ENCODE measurements at regions of chr10 and their contacts with region 1.

Region 1: DNA sequence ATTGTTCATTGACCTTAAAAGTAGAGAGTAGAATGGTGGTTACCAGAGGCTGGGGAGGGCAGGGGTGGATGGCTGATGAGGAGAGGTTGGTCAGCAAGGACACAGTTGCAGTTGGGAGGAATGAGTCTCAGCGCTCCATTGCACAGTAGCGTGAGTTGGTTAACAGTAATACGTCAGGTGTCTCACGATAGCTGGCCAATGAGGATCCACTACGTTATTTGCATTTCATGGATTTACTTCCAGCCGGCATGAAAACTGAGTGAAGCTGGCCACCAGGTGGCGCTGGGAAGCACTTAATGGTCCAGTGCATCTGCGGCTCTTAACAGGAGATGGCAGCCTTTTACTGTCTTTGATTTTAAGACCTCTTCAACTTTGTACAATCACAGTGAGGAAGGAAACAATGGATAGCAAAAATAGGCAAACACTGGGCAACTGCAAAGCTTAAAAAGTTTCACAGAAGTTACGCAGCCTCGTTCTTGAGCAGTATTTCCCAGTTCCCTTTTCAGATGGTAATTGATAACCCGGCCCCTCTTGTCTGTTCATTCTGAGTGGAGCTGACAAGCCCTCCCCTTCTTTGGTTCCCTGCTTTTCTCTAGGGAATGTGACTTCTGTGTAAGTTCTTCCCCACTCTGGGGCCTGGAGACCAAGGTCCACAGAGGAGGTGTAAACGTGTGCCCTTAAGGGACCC is 23.7 kb downstream of the AKR1E2 start:
- DNase-seq: peak; percentile 64
- ATAC-seq: peak; percentile 93
- H3K4me3 ChIP-seq: no peak overlapping the region
- H3K27ac ChIP-seq: no peak overlapping the region
- H3K4me1 ChIP-seq: no peaks in the 10 kb centered on the region; the same call in 1 of the 2 replicates
- H3K27me3 ChIP-seq: no peaks in the 10 kb centered on the region
- CTCF ChIP-seq: peak; percentile 94

Region 2: GRCh38 chr10:4708123-4708759 is 141.5 kb before region 1 on chr10:
- CTCF ChIA-PET with region 1: no interaction called
- POLR2A ChIA-PET with region 1: no interaction called
- in situ Hi-C with region 1: no loop called
- intact Hi-C with region 1: no loop called
- DNase-seq: no peak
- ATAC-seq: no peak
- H3K4me3 ChIP-seq: no peak overlapping the region
- H3K27ac ChIP-seq: peak overlapping the region; percentile 94; the same call in 1 of the 2 replicates
- H3K4me1 ChIP-seq: peaks cover 9% of the 10 kb centered on the region; the same call in 1 of the 2 replicates
- H3K27me3 ChIP-seq: no peaks in the 10 kb centered on the region
- CTCF ChIP-seq: peak; percentile 28

Region 3: GRCh38 chr10:5283305-5284158 is 433.8 kb after region 1 on chr10:
- CTCF ChIA-PET with region 1: no interaction called
- POLR2A ChIA-PET with region 1: no interaction called
- in situ Hi-C with region 1: no loop called
- intact Hi-C with region 1: loop called (anchors 10 kb)
- DNase-seq: no peak
- ATAC-seq: peak; percentile 82
- H3K4me3 ChIP-seq: no peak overlapping the region
- H3K27ac ChIP-seq: no peak overlapping the region
- H3K4me1 ChIP-seq: no peaks in the 10 kb centered on the region
- H3K27me3 ChIP-seq: no peaks in the 10 kb centered on the region
- CTCF ChIP-seq: peak; percentile 70

Region 4: DNA sequence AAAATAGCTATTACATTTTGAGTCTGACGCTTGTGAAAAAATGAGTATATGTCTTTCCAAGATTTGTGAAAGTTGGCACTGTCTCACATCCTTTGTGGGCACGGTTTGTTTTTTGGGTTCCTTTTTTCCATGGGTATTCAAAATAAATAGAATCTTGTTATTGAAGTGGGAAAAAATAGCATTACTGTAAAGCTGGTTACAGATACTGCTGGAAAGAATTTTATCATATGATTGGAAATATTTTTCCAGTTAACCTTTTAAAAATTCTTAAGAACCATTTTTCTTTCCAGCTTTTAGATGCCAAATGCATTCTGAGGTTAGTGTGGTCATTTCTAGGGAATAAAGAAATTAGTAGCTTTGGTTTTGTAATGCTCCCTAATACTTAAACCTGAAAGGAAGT is 574.1 kb after region 1 on chr10:
- CTCF ChIA-PET with region 1: no interaction called
- POLR2A ChIA-PET with region 1: no interaction called
- in situ Hi-C with region 1: no loop called
- intact Hi-C with region 1: loop called (anchors 10 kb)
- DNase-seq: no peak
- ATAC-seq: no peak
- H3K4me3 ChIP-seq: no peak overlapping the region
- H3K27ac ChIP-seq: no peak overlapping the region
- H3K4me1 ChIP-seq: no peaks in the 10 kb centered on the region
- H3K27me3 ChIP-seq: no peaks in the 10 kb centered on the region
- CTCF ChIP-seq: no peak